AG04450 (cell line): ENCODE measurements at regions of chr21 and their contacts with region 1.

Region 1: DNA sequence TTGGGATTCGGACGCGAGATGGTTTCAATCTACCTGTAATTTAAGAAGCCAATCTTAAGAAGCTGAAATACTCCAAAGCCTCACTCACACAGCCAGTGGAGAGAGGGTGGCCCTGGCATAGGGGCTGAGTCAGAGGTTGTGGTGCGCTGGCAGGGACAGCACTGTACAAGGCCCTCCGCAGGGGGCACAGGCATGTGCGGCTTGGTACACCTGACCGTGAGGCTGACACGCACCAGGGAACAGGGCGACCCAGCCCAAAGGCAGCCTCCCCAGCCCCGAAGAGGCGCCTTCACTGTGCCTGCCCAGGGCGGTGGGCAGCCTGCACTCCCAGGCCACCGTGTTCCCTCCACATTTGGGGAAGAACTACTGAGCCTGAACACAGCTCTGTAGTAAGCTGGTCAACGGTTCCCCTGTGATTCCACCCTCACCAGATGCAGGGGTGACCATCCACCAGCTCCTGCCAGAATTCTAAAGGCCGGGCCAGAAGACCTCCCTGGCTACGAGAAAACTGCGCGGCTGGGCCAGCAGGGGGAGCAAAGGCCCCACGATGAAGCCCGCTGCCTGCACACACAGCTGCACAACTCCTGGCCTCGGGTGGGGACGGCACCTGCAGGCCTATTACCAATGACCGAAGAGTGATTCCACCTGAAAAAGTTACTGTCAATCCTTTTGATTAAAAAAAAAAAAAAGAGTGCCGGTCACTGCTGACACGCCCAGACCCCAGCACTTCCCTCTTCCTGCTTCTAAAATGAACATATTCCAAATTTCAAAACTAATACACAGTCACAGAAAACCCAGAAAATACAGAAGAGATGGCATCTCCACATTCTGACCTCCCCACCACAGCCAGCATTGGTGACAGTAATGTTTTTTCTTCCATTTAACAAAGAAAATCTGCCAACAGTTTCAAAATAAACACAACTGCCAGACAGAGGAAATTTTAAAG is 49.6 kb upstream of the RIPK4 start:
- DNase-seq: no peak
- H3K4me3 ChIP-seq: no peak overlapping the region
- H3K27ac ChIP-seq: no peak overlapping the region
- H3K27me3 ChIP-seq: no peaks in the 10 kb centered on the region
- CTCF ChIP-seq: peak; percentile 90

Region 2: GRCh38 chr21:41283211-41283818 is 533.2 kb before region 1 on chr21:
- CTCF ChIA-PET with region 1: interaction called, 24 read pairs
- POLR2A ChIA-PET with region 1: no interaction called
- DNase-seq: peak; percentile 65
- H3K4me3 ChIP-seq: no peak overlapping the region
- H3K27ac ChIP-seq: no peak overlapping the region
- H3K27me3 ChIP-seq: no peaks in the 10 kb centered on the region
- CTCF ChIP-seq: peak; percentile 88

Region 3: GRCh38 chr21:41796451-41797080 is 19.9 kb before region 1 on chr21:
- CTCF ChIA-PET with region 1: interaction called, 17 read pairs
- POLR2A ChIA-PET with region 1: no interaction called
- DNase-seq: no peak
- H3K4me3 ChIP-seq: no peak overlapping the region
- H3K27ac ChIP-seq: no peak overlapping the region
- H3K27me3 ChIP-seq: no peaks in the 10 kb centered on the region
- CTCF ChIP-seq: no peak

Region 4: DNA sequence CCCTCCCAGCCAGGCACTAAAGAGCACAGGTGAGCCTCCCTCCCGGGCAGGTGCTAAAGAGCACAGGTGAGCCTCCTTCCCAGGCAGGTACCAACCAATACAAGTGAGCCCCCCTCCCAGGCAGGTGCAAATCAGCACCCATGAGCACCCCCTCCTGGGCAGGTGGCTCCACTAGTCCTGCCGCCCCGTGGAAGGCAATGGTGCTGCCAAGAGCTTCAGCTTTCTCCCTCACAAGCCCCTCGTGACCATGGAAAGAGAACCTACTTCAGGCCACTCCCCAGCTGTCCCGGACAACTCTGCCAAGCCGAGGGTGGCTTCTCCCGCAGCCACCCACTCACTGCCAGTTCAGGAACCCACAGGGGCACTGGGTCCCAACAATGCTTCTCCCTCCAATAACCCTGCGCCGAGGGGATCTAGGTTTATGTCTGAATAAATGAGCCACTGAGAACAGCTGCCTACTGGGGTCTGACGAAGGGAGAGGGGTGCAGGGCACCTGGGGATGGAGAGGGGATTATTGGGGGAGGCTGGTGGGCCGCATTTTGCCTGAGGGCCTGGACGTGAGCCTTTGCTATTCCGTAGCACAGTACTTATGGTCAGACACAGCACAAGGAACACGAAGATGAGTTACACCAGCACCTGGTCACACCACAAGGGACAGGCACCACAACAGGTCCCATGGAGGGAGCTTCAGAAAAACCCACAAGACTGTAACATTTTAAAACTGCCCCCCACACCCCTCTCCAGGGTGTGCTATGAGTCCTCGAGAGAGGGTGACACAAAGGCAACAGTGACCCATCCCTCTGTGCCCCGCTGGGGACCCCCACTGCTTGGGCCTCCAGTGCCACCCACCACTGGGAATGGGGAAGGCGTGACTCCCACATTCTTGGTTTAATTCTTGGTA is 16.4 kb after region 1 on chr21:
- CTCF ChIA-PET with region 1: interaction called, 16 read pairs
- POLR2A ChIA-PET with region 1: no interaction called
- DNase-seq: no peak
- H3K4me3 ChIP-seq: no peak overlapping the region
- H3K27ac ChIP-seq: no peak overlapping the region
- H3K27me3 ChIP-seq: no peaks in the 10 kb centered on the region
- CTCF ChIP-seq: no peak

Region 5: DNA sequence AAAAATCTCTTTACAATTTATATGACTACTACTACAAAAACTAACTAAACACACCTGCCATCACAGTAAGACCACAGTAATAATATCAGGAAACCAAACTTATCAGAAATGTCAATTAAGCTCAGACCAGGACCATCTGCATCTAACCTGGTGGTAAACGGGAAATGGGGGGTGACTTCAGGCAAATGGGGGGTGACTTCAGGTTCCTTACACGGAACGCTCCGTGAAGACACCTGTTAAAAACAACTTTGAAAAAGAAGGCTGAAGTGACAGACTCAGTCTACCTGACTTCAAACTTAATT is 46.9 kb after region 1 on chr21:
- CTCF ChIA-PET with region 1: interaction called, 14 read pairs
- POLR2A ChIA-PET with region 1: no interaction called
- DNase-seq: no peak
- H3K4me3 ChIP-seq: no peak overlapping the region
- H3K27ac ChIP-seq: no peak overlapping the region
- H3K27me3 ChIP-seq: no peaks in the 10 kb centered on the region
- CTCF ChIP-seq: no peak

Region 6: GRCh38 chr21:42107881-42108553 is 291.5 kb after region 1 on chr21:
- CTCF ChIA-PET with region 1: interaction called, 18 read pairs
- POLR2A ChIA-PET with region 1: interaction called, 4 read pairs
- DNase-seq: peak; percentile 10
- H3K4me3 ChIP-seq: no peak overlapping the region
- H3K27ac ChIP-seq: no peak overlapping the region
- H3K27me3 ChIP-seq: peaks cover 9% of the 10 kb centered on the region
- CTCF ChIP-seq: peak; percentile 66

Region 7: GRCh38 chr21:42125571-42126544 is 309.4 kb after region 1 on chr21:
- CTCF ChIA-PET with region 1: interaction called, 19 read pairs
- POLR2A ChIA-PET with region 1: no interaction called
- DNase-seq: peak; percentile 8
- H3K4me3 ChIP-seq: no peak overlapping the region
- H3K27ac ChIP-seq: no peak overlapping the region
- H3K27me3 ChIP-seq: peaks cover 40% of the 10 kb centered on the region
- CTCF ChIP-seq: peak; percentile 10; the same call in 1 of the 2 replicates

Region 8: DNA sequence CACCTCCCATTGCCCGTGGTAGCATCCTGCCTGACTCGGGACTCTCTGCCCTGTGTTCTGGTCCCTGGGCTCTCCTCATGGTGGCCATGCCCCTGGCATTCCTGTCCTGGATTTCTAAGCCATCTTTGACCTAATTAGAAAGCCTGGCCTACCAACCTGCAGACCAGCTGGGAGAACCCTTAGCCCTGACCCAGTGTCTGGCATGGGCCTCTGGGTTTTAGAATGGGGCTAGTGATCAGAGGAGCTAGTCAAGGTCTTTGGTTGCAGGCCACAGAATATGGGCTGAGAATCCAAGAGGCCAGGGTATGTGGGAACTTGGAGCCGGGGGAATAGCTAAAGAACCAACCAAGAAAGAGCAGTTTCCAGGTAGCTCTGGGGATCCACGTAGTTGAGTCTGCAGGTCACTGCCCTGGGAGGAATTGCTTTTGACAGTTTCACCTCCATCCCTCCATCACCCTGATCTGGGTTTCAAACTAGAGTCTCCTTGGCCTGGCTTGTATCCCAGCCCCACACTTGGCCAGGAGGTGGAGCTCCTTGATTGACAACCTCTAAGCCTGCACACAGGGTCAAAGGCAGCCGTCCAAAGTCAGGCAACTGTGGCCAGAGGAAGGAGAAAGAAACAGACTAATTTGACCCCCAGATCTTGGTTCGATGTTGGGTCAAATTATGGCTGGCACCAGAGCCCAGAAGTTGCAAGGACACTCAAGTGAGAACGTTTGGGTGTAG is 347.7 kb after region 1 on chr21:
- CTCF ChIA-PET with region 1: no interaction called
- POLR2A ChIA-PET with region 1: no interaction called
- DNase-seq: no peak
- H3K4me3 ChIP-seq: no peak overlapping the region
- H3K27ac ChIP-seq: no peak overlapping the region
- H3K27me3 ChIP-seq: peaks cover 7% of the 10 kb centered on the region
- CTCF ChIP-seq: peak; percentile 24; the same call in 1 of the 2 replicates